ENCODE measurements at regions of chr1 and their contacts with region 1.

Region 1: GRCh38 chr1:9626201-9626608 is 25.3 kb upstream of the PIK3CD start:
- DNase-seq: no peak
- ATAC-seq: peak in 1 of 2 experiments; percentile 4; a peak in 2 of 6 replicates
- H3K4me3 ChIP-seq: peak overlapping the region; percentile 53
- H3K27ac ChIP-seq: peak overlapping the region in 1 of 2 experiments; percentile 70; a peak in 4 of 6 replicates
- H3K4me1 ChIP-seq: no peaks in the 10 kb centered on the region
- CTCF ChIP-seq: no peak
- EP300 ChIP-seq: no peak
- POLR2A ChIP-seq: no peak
- RAD21 ChIP-seq: no peak

Region 2: DNA sequence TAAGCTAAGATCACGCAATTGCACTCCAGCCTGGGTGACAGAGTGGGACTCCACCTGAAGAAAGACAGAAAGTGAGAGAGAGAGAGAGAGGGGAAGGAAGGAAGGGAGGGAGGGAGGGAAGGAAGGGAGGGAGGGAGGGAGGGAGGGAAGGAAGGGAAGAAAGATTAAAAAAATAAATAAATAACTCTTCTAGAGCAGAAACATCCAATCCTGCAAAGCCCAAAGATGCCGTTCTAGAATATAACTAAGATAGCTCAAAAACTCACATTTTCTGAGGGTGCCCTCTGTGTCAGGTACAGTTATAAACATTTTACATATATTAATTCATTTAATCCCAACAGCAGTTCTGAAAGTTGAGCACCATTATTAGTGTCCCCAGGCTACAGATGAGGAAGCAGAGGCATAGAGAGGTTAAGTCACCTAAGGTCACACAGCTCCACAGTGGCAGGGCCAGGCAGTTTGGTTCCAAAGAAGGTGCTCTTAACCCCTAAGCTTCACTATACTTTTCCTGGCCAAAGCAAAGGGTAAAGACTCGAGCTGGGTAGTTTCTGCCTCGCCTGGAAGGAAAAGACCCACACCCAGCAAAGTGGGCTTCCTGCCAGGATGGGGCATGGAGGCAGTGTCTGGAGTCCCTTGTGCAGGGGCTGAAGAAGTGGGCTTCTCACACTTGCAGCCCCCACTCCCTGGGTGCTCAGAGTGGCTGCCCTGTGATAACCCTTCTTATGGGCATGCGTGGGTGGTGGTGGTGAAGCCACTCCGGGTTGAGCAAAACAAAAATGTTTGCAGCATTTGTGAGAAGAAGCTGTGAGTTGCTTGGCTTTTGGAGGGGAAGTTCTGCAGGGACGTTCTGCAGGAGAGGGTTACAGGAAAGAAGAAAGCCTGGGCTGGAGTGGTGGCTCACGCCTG is 17.4 kb after region 1 on chr1:
- CTCF ChIA-PET with region 1: interaction called, 13 read pairs
- POLR2A ChIA-PET with region 1: interaction called, 5 read pairs
- DNase-seq: no peak
- ATAC-seq: no peak
- H3K4me3 ChIP-seq: no peak overlapping the region
- H3K27ac ChIP-seq: no peak overlapping the region
- H3K4me1 ChIP-seq: no peaks in the 10 kb centered on the region
- CTCF ChIP-seq: no peak
- EP300 ChIP-seq: no peak
- POLR2A ChIP-seq: no peak
- RAD21 ChIP-seq: no peak

Region 3: GRCh38 chr1:9689011-9689706 is 63.0 kb after region 1 on chr1:
- CTCF ChIA-PET with region 1: interaction called, 37 read pairs
- POLR2A ChIA-PET with region 1: interaction called, 3 read pairs
- DNase-seq: peak; percentile 38 to 61
- ATAC-seq: peak; percentile 67 to 74
- H3K4me3 ChIP-seq: peak overlapping the region; percentile 85
- H3K27ac ChIP-seq: peak overlapping the region; percentile 71 to 87
- H3K4me1 ChIP-seq: peaks cover 23% of the 10 kb centered on the region; the same call in 2 of the 3 replicates
- CTCF ChIP-seq: no peak
- EP300 ChIP-seq: no peak
- POLR2A ChIP-seq: no peak
- RAD21 ChIP-seq: no peak

Region 4: GRCh38 chr1:9717193-9718005 is 91.2 kb after region 1 on chr1:
- CTCF ChIA-PET with region 1: interaction called, 28 read pairs
- POLR2A ChIA-PET with region 1: no interaction called
- DNase-seq: no peak
- ATAC-seq: no peak
- H3K4me3 ChIP-seq: no peak overlapping the region
- H3K27ac ChIP-seq: peak overlapping the region; percentile 95 to 96; a peak in 5 of 6 replicates
- H3K4me1 ChIP-seq: peaks cover 22% of the 10 kb centered on the region
- CTCF ChIP-seq: no peak
- EP300 ChIP-seq: no peak
- POLR2A ChIP-seq: no peak
- RAD21 ChIP-seq: no peak

Region 5: DNA sequence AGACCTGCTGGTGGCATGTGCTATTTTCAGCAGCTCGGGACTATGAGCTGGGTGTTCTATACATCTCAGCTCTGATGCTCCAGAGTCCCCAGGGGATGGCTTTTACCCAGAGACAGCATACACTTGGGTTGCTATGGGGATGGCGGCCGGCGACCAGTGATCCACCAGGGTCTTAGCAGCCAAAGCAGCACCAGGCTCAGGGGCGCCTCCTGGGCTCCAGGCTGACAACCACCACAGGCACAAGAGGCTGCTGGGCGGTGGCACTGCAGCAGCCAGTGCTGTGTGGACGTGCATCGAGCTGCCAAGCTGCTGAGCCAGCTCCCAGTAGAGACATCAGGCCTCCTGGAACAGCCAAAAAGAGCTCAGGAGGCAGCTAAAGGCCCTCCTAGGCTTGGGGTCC is 235.2 kb after region 1 on chr1:
- CTCF ChIA-PET with region 1: interaction called, 22 read pairs
- POLR2A ChIA-PET with region 1: no interaction called
- DNase-seq: no peak
- ATAC-seq: peak in 1 of 2 experiments; percentile 46; a peak in 1 of 6 replicates
- H3K4me3 ChIP-seq: no peak overlapping the region
- H3K27ac ChIP-seq: no peak overlapping the region
- H3K4me1 ChIP-seq: no peaks in the 10 kb centered on the region
- CTCF ChIP-seq: no peak
- EP300 ChIP-seq: no peak
- POLR2A ChIP-seq: no peak
- RAD21 ChIP-seq: no peak

Region 6: DNA sequence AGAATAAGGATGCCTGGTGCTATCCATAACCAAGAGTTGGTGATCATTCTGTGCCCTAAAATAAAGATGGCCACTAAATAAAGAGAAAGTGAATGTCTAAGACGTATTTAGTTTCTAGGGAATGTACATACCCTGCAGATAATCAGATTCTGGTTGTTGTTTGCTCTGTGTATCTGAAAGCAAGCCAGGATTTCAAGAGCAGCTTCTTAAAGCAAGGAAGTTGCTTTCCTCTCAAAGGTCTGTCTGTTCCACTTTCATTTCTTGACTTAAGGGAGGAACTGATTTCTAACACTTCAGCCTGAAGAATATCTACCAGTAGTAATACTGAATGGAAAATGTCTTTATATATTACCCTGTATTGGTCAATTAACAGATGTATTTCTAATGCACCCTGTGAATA is 672.9 kb after region 1 on chr1:
- CTCF ChIA-PET with region 1: no interaction called
- POLR2A ChIA-PET with region 1: no interaction called
- DNase-seq: no peak
- ATAC-seq: no peak
- H3K4me3 ChIP-seq: no peak overlapping the region
- H3K27ac ChIP-seq: no peak overlapping the region
- H3K4me1 ChIP-seq: no peaks in the 10 kb centered on the region
- CTCF ChIP-seq: no peak
- EP300 ChIP-seq: no peak
- POLR2A ChIP-seq: no peak
- RAD21 ChIP-seq: no peak

Measured in A549 (cell line).